ENCODE measurements at regions of chr19 and their contacts with region 1.

Region 1: DNA sequence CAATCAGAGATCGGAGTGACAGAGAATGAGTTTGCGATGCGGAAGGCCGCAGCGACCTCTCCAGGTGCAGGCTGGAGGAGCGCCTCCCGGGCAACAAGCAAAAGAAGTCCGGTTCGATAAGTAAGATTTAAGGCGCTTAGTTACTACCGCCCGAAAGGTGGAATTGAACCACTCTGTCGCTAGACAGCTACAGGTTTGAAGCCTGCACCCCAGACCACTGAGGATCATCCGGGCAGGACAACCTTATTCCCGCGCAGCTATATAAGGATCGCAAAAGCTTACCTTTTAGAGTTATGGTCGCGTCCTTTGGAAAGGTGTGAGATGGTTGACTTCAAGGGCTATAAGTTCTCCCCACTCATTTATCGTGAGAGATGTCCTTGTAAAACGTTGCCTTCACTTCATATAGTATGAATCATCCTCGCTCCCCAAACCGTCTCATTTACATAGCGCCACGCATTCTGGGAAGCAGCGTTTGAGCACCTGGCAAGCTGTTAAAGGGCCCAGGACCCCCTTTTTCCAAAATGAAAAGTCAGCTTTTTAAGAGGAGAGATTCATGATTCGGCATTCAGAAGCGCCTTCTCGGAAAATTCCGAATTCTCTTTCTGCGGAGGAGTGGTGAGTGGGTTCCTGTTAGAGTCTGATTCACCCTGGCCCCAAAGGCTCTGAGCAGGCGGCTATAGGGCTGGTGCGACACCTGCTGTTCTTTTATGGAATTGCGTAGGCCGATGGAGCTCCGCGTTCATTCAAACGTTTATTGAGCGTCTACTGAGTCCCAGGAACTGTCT is 10.8 kb downstream of the FOSB start:
- DNase-seq: peak; percentile 71 to 97 (median 80)

Region 2: GRCh38 chr19:45423589-45424190 is 55.0 kb before region 1 on chr19 and contains the start of gene ERCC1:
- intact Hi-C with region 1: loop called (anchors 1 kb)
- DNase-seq: peak; percentile 81 to 98 (median 88)

Region 3: DNA sequence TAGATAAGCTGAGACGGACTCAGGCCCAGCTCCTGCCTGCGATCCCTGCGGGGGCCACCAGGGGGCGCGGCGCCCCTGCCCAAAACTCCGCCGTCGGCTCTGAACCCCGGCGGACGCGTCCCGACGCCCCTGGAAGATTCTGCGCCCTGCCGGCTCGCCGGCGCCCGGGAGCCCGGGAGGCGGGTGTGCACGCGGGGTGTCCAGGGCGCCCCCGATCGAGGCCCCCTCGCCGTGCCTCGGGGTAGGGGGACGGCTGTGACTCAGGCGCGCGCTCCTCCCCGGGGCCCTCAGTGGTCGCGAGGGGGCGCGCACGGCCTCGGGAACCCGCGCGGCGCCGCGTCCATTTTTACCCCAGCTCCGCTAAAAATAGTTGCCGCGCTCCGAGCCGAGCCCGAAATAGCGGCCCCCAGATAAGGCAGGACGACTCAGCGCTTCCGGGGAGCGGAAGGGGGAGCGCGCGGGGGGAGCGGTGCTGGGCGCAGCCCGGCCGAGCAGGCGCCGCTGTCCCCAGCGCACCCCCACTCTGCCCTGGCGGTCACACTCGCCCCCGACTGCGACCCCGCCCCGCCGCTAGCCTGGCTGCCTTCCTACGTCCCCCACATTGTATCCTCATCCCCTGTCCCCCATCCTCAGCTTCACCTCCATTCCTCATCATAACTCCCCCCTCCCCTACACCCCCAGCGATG is 38.9 kb before region 1 on chr19:
- intact Hi-C with region 1: loop called (anchors 1 kb)
- DNase-seq: peak; percentile 72 to 97 (median 82)

Measured in posterior cingulate gyrus (tissue), 11 donors.